Kidney (tissue), 22 donors: ENCODE measurements at regions of chr5 and their contacts with region 1.

Region 1: DNA sequence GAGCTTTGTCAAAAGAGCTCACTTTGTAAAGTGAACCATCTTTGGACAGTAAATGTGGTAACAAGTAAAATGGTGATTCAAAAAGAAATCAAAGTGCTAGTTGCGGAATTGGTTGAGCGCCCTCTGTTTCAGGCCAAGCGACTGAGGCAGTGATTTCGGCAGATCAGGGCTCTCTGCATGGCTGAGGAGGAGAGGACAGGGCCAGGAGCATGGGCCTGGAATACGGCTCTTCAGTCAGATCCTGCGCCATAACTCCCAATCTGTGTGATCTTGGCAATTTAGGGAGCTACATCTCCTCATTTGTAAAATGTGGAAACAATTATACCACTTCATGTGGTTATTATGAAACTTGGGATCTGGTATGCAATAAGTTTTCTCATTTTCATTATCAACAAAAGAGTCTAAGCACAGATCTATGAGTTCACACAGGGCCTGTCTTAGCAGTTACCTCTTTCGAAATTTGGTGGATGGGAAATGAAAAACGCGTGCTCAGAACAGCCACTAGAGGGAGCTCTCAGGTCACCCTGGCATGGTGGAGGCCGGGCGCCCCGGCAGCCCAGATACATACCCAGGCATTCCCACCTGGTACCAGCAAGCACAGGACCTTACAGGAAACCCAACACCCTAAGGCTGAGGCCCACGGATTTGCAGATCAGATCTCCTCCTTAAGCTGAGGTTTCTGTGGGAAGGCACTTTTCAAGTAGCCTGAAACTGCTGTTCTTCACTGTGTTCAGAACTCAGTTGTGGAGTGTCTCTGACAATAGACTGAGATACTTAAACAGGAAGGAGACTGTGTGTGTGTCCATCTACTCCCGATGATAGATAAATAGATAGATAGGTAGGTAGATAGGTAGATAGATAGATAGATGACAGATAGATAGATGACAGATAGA is 303.7 kb downstream of the RAB3C start:
- DNase-seq: peak; percentile 65 to 82 (median 75)
- H3K4me3 ChIP-seq: no peak overlapping the region
- H3K27ac ChIP-seq: no peak overlapping the region
- H3K4me1 ChIP-seq: peaks cover 0 to 11% (median 0%) of the 10 kb centered on the region in 3 donors
- H3K27me3 ChIP-seq: no peaks in the 10 kb centered on the region
- CTCF ChIP-seq: peak; percentile 87

Region 2: DNA sequence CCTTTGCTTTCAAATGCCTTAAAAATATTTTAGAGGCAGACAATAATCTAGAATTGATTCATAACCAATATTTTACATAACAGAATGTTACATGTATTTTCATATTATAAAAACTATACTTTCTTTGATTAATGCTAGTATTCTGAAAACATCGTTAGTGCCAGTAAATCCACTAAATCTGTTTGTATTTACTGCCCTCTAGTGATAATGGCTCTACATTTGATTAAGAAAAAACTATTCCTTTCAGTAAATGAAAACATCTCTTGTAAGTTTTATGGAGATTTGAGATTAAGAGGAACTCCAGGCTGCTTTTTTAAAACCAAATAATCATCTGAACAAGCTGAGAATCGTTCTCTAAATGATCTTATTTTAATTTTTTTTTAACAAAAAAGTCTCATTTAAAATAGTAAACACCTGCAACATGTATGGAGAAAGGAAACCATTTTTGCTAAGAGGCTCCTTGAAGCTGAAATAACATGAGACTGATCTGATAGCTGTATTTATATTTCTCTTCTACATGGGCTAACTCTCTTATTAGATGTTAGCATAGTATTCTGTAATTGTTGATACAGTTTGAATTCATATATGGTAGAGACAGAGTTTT is 121.0 kb after region 1 on chr5:
- intact Hi-C with region 1: loop called (anchors 10 kb)
- DNase-seq: peak in 2 of 5 donors; percentile 54 to 61
- H3K4me3 ChIP-seq: no peak overlapping the region
- H3K27ac ChIP-seq: no peak overlapping the region
- H3K4me1 ChIP-seq: no peaks in the 10 kb centered on the region
- H3K27me3 ChIP-seq: no peaks in the 10 kb centered on the region
- CTCF ChIP-seq: peak; percentile 42

Region 3: GRCh38 chr5:59069438-59070079 is 183.0 kb after region 1 on chr5:
- intact Hi-C with region 1: no loop called
- DNase-seq: no peak
- H3K4me3 ChIP-seq: no peak overlapping the region
- H3K27ac ChIP-seq: no peak overlapping the region
- H3K4me1 ChIP-seq: no peaks in the 10 kb centered on the region
- H3K27me3 ChIP-seq: no peaks in the 10 kb centered on the region
- CTCF ChIP-seq: no peak

Region 4: DNA sequence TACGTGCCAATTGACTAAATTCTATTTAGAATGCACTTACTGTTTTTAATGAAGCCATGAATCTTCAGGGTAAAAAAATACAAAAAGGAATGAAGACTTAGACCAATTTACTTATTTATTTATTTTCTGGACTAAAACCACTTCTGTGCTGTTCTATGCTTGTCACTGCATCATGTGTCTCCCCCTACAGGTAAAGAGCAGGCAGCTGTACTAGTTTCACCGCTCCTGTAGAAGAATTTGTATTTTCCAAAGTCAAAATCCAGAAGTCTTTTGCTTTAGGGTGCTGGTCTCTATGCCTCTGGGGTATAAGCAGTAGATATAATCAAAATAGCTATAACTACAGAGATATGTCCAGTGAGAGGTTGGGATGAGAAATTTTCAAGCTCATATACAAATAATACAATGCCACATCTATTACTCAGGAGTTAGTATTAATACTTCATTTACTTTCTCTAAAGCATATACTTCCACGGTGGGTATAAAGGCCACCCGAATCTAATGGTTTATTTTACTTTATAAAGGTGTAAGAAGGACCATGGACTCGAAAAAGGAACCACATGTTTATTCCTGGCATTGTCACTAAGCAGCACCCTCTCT is 287.8 kb after region 1 on chr5:
- intact Hi-C with region 1: loop called (anchors 10 kb)
- DNase-seq: peak in 3 of 5 donors; percentile 26 to 87 (median 77)
- H3K4me3 ChIP-seq: no peak overlapping the region
- H3K27ac ChIP-seq: no peak overlapping the region
- H3K4me1 ChIP-seq: no peaks in the 10 kb centered on the region
- H3K27me3 ChIP-seq: no peaks in the 10 kb centered on the region
- CTCF ChIP-seq: peak; percentile 80